PC-3 (cell line): ENCODE measurements at regions of chr14 and their contacts with region 1.

Region 1: GRCh38 chr14:31263485-31264133 is 56.0 kb upstream of the HECTD1 start:
- DNase-seq: peak; percentile 97
- ATAC-seq: peak; percentile 99
- H3K4me3 ChIP-seq: no peak overlapping the region
- H3K27ac ChIP-seq: peak overlapping the region; percentile 51
- H3K4me1 ChIP-seq: peaks cover 44% of the 10 kb centered on the region
- H3K27me3 ChIP-seq: no peaks in the 10 kb centered on the region
- CTCF ChIP-seq: no peak

Region 2: DNA sequence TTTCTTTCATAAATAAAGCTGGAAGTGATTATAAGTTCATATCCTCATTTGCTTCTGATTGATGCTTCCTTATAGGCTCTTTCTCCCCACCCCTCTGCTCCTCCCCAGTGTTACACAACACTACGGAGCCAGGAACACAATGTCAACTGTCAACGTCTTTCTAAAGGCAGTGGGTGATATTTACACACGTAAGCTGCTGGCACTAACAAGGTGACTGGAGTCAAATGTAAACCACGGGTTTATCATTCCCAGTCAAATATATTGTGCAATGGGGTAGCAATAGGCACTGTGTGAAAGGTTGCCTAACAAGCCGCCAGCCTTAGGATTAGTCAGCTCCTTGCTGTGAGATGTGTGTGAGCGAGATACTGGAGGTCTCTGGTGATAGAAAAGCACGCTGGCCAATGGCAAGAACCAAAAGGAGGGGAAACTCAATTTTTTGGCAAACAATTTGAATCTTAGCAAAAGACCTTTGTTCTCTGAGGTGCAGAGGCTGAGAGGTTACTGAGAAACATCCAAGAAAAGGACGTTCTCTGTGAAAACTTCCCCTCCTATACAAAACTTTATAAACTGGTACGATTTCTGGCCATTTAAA is 33.9 kb before region 1 on chr14:
- CTCF ChIA-PET with region 1: no interaction called
- POLR2A ChIA-PET with region 1: no interaction called
- intact Hi-C with region 1: loop called (anchors 1 kb)
- DNase-seq: peak; percentile 99
- ATAC-seq: peak; percentile 96
- H3K4me3 ChIP-seq: no peak overlapping the region; the same call in 1 of the 2 replicates
- H3K27ac ChIP-seq: peak overlapping the region; percentile 80
- H3K4me1 ChIP-seq: peaks cover 37% of the 10 kb centered on the region
- H3K27me3 ChIP-seq: no peaks in the 10 kb centered on the region
- CTCF ChIP-seq: no peak